ENCODE measurements at regions of chr17 and their contacts with region 1.

Region 1: DNA sequence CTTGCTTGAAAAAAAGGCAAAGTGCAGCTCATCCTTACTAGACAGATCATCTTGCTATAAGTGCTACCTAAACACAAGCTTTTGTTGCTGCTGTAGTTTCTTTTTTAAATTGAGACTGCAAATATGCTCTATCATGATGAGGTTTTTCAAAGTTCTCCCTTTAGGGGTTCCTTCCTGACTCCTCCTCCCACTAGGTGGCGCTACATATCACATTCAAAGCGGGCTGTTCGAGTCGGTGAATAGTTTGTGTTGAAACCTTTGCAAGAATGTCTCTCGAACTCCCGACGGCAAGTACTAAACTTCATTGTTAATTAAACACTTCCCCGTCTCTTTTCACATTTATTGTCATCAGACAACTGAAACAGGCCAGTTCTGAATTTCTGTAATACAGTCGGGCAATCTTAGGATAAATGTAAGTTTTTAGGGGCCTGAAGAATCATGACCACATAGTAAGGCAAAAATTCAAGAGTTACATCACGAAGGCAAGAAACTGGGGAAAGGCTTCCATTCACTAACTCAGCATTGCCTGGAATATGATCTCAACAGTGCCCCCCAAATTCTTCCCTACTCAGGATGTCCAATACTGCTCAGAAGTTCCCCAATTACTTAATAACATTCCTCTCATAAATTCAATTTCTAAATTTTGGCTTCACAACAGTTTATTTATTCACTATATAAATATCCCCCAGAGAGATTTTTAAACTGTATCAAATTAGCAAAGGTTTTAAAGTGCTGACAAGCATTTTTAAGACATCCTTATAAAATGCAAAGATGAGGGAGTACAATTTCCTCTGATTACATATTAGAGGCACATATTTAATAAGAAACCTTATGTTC is 6.7 kb downstream of the HS3ST3A1 start:
- DNase-seq: peak in 4 of 5 donors; percentile 82 to 94 (median 88)
- H3K4me3 ChIP-seq: no peak overlapping the region
- H3K27ac ChIP-seq: no peak overlapping the region
- H3K4me1 ChIP-seq: peaks cover 0 to 3% (median 0%) of the 10 kb centered on the region in 3 donors
- H3K27me3 ChIP-seq: no peaks in the 10 kb centered on the region
- CTCF ChIP-seq: peak; percentile 82

Region 2: GRCh38 chr17:14926526-14927122 is 1331.6 kb after region 1 on chr17:
- intact Hi-C with region 1: loop called (anchors 5 kb)
- DNase-seq: peak in 4 of 5 donors; percentile 62 to 90 (median 77)
- H3K4me3 ChIP-seq: no peak overlapping the region
- H3K27ac ChIP-seq: no peak overlapping the region
- H3K4me1 ChIP-seq: no peaks in the 10 kb centered on the region
- H3K27me3 ChIP-seq: no peaks in the 10 kb centered on the region
- CTCF ChIP-seq: peak; percentile 68

Measured in kidney (tissue), 22 donors.